Heart left ventricle (tissue), 16 donors: ENCODE measurements at regions of chr3 and their contacts with region 1.

Region 1: GRCh38 chr3:120558771-120559241 is 37.3 kb upstream of the NDUFB4 start:
- DNase-seq: peak; percentile 88 to 94 (median 88)
- ATAC-seq: peak; percentile 37 to 60 (median 44)
- H3K4me3 ChIP-seq: peak overlapping the region; percentile 9 to 62 (median 52)
- H3K27ac ChIP-seq: peak overlapping the region; percentile 81 to 96 (median 91)
- H3K4me1 ChIP-seq: peaks cover 0 to 72% (median 49%) of the 10 kb centered on the region in 12 donors
- H3K27me3 ChIP-seq: no peaks in the 10 kb centered on the region
- CTCF ChIP-seq: peak; percentile 95 to 100 (median 99)
- POLR2A ChIP-seq: peak in 1 of 2 donors; percentile 33

Region 2: DNA sequence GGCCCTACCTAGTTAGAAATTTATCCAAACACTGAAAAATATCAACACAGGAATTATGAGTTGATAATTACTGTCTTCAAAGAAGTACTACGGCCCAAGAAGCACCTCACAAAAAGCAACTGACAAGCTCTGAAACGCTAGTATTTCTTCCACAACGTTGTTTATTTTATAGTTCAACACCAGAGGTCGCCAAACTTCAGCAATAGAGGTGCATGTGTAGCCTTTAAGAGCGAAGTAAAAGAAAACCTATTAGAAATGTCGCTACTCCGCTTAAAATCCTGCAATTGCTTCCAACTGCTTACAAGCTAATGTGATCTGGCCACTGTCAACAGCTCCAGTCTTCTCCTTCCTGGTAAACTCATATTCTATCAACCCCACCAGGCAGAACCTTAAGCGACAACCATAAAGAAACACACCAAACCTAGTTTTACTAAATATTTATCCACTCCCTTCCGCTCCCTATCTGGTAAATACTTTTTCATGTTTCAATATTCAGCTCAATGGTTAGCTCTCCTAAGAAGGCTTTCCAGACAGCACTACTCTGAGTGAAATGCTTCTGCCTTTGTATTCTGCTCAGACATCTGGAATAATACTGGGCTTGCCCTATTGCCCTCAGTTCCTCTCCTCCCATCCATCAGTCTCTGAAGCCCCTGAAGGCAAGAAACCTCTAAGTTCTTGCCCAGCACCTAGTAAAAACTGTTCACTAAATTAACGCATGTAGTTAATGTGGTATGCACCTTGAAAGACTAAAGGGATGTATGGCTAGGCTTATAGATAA is 666.7 kb before region 1 on chr3:
- intact Hi-C with region 1: loop called in 1 of 10 experiments (anchors 10 kb)
- DNase-seq: peak in 2 of 5 donors; percentile 30 to 45
- ATAC-seq: peak; percentile 64 to 81 (median 74)
- H3K4me3 ChIP-seq: no peak overlapping the region
- H3K27ac ChIP-seq: no peak overlapping the region
- H3K4me1 ChIP-seq: peaks cover 0 to 11% (median 7%) of the 10 kb centered on the region in 12 donors
- H3K27me3 ChIP-seq: no peaks in the 10 kb centered on the region
- CTCF ChIP-seq: peak; percentile 36 to 84 (median 78)
- POLR2A ChIP-seq: no peak

Region 3: DNA sequence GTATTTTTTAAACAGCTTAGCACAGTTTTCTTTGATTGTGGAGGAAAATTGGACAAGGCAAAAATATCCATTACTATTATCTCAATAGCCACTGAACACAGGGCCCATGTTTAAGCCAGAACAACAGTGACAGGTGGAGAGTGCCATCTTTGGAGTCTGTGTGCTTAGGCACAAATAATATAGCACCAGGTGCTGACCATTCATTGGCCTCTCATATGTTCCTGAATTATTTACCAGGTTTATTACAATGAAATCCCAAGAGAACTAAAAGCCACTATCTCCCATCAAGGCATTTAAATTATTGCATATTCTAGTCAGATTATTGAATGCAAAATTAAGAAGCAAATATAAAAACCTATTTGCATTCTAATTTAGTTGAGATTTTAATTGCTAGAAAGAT is 313.4 kb before region 1 on chr3:
- intact Hi-C with region 1: loop called (anchors 1 to 5 kb)
- DNase-seq: no peak
- ATAC-seq: no peak
- H3K4me3 ChIP-seq: no peak overlapping the region
- H3K27ac ChIP-seq: no peak overlapping the region
- H3K4me1 ChIP-seq: no peaks in the 10 kb centered on the region
- H3K27me3 ChIP-seq: peaks cover 0 to 8% (median 0%) of the 10 kb centered on the region in 9 donors
- CTCF ChIP-seq: no peak
- POLR2A ChIP-seq: no peak

Region 4: GRCh38 chr3:120438665-120439370 is 120.0 kb before region 1 on chr3:
- intact Hi-C with region 1: loop called in 2 of 10 experiments (anchors 5 to 10 kb)
- DNase-seq: peak; percentile 75 to 83 (median 82)
- ATAC-seq: peak; percentile 53 to 82 (median 80)
- H3K4me3 ChIP-seq: no peak overlapping the region
- H3K27ac ChIP-seq: peak overlapping the region in 11 of 12 donors; percentile 30 to 87 (median 70)
- H3K4me1 ChIP-seq: peaks cover 14 to 99% (median 84%) of the 10 kb centered on the region in 12 donors
- H3K27me3 ChIP-seq: no peaks in the 10 kb centered on the region
- CTCF ChIP-seq: no peak
- POLR2A ChIP-seq: no peak

Region 5: DNA sequence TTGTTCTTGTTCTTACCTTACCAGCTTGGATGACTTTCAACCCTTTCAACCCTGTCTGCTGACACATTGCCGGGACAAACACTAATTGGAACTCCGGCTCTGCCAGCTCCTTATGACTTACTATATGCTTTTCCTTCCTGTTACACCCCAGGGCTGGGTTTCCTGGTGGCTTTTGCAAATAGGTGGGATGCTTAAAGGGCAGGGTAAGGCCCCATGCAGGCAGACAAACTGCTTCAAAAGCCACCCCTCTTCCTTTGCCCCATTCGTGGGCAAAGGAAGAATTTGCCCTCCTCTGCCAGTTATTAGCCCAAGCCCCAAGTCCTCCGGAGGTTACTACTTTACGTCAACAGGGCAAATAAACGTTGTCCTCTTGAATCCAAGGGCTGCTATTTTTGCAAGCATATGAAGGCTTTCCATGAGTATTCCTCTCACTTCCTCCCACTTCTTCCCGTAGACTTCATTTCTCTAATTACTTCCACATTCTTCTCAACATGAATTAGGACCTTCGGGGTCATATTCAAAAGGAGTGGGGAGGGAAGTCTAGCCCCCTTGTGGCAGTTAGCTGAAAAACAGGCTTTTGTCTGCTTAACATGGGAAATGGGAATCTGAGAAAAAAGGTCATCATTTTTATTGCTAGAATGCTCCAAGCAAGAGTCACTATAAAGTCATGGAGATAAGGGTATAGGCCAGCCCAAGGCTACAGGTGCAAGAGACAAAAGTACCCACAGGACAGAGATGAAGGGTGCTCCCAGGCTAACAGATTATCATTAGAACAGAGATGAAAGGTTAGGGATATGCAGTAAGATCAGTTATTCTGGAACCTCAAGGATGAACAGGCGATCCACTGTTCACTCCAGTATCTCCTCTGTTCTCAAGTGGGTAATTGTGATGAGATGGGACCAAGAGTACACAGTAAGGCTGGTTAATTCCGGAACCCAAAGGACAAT is 51.7 kb before region 1 on chr3:
- intact Hi-C with region 1: loop called in 2 of 10 experiments (anchors 2 to 5 kb)
- DNase-seq: peak in 2 of 5 donors; percentile 17 to 40
- ATAC-seq: peak in 3 of 4 donors; percentile 38 to 77 (median 67)
- H3K4me3 ChIP-seq: peak overlapping the region in 2 of 12 donors; percentile 1 to 28
- H3K27ac ChIP-seq: peak overlapping the region in 8 of 12 donors; percentile 4 to 36 (median 27)
- H3K4me1 ChIP-seq: peaks cover 0 to 25% (median 14%) of the 10 kb centered on the region in 12 donors
- H3K27me3 ChIP-seq: no peaks in the 10 kb centered on the region
- CTCF ChIP-seq: peak; percentile 55 to 76 (median 68)
- POLR2A ChIP-seq: no peak

Region 6: DNA sequence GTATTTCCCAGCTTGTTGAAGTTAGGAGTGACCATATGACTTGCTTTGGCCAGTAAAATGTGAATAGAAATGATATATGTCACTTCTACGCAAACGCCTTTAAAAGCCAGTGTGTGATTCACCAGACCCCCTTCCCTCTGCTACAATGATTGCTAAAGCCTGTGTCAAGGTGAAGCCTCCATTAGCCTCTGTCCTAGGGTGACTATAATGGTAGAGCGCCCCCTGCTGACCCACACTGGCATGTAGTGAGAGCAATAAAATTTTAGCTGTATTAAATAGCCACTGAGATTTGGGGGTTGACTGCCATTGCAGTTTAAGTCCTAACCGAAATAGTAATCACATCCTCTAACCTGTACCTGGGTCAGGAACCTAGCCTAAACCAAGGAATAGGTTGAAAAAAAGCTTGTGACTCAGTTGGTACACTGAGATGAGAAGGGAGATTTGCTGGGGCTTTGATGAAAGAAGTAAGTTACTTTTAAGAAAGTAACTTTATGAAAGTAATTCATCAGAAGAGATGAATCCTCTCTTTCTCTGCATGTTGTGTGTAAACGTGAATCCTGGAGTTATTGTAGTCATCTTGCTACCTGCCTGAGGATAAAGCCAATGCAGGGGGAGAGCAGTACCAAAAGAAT is 236.3 kb after region 1 on chr3:
- intact Hi-C with region 1: loop called (anchors 1 to 5 kb)
- DNase-seq: peak; percentile 64 to 84 (median 76)
- ATAC-seq: peak; percentile 80 to 93 (median 90)
- H3K4me3 ChIP-seq: no peak overlapping the region
- H3K27ac ChIP-seq: no peak overlapping the region
- H3K4me1 ChIP-seq: no peaks in the 10 kb centered on the region
- H3K27me3 ChIP-seq: no peaks in the 10 kb centered on the region
- CTCF ChIP-seq: peak; percentile 60 to 87 (median 80)
- POLR2A ChIP-seq: no peak